AG04449 (cell line): ENCODE measurements at regions of chr15 and their contacts with region 1.

Region 1: GRCh38 chr15:32849769-32850668 is 132.2 kb downstream of the GREM1 start:
- DNase-seq: peak; percentile 95
- H3K4me3 ChIP-seq: no peak overlapping the region
- CTCF ChIP-seq: no peak

Region 2: GRCh38 chr15:32706704-32707103 is 143.3 kb before region 1 on chr15:
- CTCF ChIA-PET with region 1: no interaction called
- POLR2A ChIA-PET with region 1: no interaction called
- DNase-seq: no peak
- H3K4me3 ChIP-seq: no peak overlapping the region
- CTCF ChIP-seq: no peak

Region 3: GRCh38 chr15:32828507-32829186 is 21.4 kb before region 1 on chr15:
- CTCF ChIA-PET with region 1: interaction called, 84 read pairs
- POLR2A ChIA-PET with region 1: interaction called, 13 read pairs
- DNase-seq: peak; percentile 96
- H3K4me3 ChIP-seq: no peak overlapping the region
- CTCF ChIP-seq: no peak

Region 4: GRCh38 chr15:32838820-32839219 is 11.2 kb before region 1 on chr15:
- CTCF ChIA-PET with region 1: interaction called, 84 read pairs
- POLR2A ChIA-PET with region 1: interaction called, 23 read pairs
- DNase-seq: peak; percentile 88
- H3K4me3 ChIP-seq: peak overlapping the region; percentile 40
- CTCF ChIP-seq: no peak